Heart left ventricle (tissue), 16 donors: ENCODE measurements at regions of chr1 and their contacts with region 1.

Region 1: DNA sequence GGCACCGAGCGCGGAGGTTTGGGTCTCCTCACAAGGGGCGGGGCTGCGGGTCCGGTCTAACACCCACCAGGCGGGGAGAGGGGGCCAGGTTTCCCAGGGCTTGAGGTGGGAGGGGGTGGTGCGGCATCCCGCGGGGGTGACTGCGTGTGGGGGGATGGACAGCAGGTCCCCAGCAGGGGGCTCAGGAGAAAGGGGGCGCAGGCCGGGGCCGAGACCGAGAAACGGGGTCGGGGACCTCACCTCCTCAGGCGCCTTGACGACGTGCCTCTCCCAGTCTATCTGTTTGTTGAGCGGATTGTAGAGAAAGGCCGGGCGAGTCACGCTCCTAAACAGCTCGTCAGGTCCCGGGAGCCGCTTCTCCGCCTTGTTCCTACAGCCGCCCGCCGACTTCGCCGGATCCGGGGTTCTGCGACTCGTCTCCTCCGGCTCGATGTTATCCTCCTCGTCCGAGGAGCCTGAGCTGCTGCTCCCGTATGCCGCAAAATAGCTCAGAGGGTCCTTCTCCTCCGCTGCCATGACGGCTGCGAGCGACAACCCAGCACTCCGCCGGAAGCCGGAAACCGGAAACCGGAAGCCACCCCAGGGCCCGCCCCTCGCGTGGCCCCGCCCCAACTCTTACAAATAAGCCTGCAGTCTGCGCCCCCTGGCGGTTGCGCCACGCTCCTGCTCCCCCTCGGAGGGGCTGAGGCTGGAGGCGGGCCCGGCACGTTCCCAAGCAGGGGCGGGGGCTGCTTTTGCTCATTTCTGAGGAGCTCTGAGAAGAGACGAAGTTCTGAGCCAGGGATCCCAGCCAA is at the start of gene C1orf52:
- DNase-seq: peak; percentile 95 to 98 (median 96)
- ATAC-seq: peak; percentile 97 to 98 (median 98)
- H3K4me3 ChIP-seq: peak within 1 kb of the TSS; percentile 66 to 98 (median 88)
- H3K27ac ChIP-seq: peak within 1 kb of the TSS; percentile 80 to 96 (median 88)
- H3K4me1 ChIP-seq: peaks cover 0 to 40% (median 33%) of the 10 kb centered on the region in 12 donors
- H3K27me3 ChIP-seq: no peaks in the 10 kb centered on the region
- CTCF ChIP-seq: peak; percentile 96 to 100 (median 99)
- POLR2A ChIP-seq: peak in 1 of 2 donors; percentile 68
- total RNA-seq, gene C1orf52: 11.4 to 23.2 (median 17.0) TPM

Region 2: DNA sequence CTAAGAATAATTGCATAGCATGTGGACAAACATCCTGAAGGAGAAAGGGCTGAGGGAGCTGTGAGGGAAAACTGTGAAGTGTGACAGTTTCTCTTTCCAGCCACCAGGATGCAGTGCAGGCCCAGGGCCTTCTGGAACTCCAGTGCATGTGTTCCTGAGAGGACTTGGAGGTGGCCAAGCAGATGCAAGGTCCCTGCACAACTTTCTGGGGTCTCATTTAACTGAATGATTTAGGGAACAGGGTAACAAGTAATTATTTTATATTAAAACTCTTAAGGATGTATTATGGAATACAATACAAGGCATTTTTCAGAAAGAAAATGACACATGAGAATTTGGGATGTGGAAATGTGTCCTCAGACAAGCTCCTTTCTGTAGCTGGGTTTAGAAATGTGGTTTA is 149.8 kb before region 1 on chr1:
- intact Hi-C with region 1: loop called in 9 of 10 experiments (anchors 1 to 5 kb)
- DNase-seq: peak in 4 of 5 donors; percentile 32 to 55 (median 45)
- ATAC-seq: peak; percentile 83 to 94 (median 91)
- H3K4me3 ChIP-seq: no peak overlapping the region
- H3K27ac ChIP-seq: no peak overlapping the region
- H3K4me1 ChIP-seq: no peaks in the 10 kb centered on the region
- H3K27me3 ChIP-seq: no peaks in the 10 kb centered on the region
- CTCF ChIP-seq: peak; percentile 49 to 77 (median 70)
- POLR2A ChIP-seq: no peak

Region 3: DNA sequence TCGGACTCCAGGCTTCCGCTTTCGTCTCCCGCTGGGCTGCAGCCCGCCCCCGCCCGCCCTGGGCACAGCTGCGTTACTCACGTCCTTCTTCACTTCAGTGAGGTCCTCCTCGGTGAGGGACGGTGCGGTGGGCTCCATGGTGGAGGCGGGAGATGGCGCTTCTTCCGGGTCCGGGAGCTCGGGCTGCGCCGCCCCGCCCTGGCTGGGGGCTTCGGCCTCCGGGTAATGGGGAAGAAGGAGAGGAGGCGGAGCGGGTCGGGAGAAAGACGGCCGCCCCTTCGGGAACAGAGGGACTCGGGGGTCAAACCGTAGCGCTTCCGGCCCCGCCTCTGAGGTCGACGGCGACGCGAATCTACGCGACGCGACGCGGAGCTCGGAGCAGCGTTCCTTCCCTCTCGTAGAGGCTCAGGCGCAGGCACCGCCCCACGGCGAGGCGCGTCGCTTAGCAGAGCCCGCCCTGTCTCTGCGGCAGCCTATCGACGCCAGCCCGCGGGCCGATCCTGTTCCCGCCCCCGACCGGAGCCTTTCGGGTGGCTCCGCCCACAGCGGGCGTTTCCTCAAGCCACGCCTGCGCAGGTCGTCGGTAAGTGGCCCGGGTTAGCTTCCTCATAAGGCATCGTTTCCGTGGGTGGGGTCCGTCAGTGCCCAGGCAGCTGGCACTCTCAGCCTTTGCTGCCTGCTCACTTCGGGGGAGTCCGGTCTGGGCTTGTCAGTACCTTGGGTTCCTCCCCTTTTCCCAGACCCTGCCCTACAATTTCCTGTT is 17.1 kb after region 1 on chr1 and contains the start of gene BCL10:
- intact Hi-C with region 1: loop called in 1 of 10 experiments (anchors 1 kb)
- DNase-seq: peak; percentile 98 to 100 (median 99)
- ATAC-seq: peak; percentile 99
- H3K4me3 ChIP-seq: peak within 1 kb of the TSS; percentile 65 to 97 (median 90)
- H3K27ac ChIP-seq: peak within 1 kb of the TSS; percentile 61 to 98 (median 97)
- H3K4me1 ChIP-seq: peaks cover 8 to 63% (median 27%) of the 10 kb centered on the region in 12 donors
- H3K27me3 ChIP-seq: no peaks in the 10 kb centered on the region
- CTCF ChIP-seq: no peak
- POLR2A ChIP-seq: peak; percentile 84 to 86
- total RNA-seq, gene BCL10: 6.9 to 20.4 (median 8.7) TPM